Posterior vena cava (tissue), 2 donors: ENCODE measurements at regions of chr16 and their contacts with region 1.

Region 1: DNA sequence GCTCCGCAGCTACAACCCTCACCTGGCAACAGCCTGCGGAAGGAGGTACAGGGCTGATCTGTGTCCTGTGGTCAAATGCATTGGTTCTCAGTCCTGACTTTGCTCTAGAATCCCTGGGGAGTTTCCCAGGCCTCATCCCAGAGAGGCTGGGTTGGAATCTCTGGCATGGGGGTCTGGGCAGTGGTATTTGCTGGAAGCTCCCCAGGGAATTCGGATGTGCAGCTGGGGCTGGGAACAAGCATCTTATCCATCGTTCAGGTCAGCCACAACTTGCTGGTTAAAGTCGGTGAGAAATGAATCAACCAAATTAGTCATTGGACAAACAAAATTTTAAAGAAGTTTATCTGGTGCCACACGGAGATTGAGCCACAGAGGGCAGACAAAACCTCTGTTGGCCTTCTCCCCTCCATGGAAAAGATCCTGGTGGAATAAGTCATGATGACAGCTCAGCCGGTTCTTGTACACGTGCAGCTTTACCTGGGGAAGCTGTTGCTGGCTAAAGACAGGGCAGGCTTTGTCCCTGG is 231.2 kb downstream of the FOXL1 start:
- DNase-seq: no peak

Region 2: GRCh38 chr16:86823895-86824671 is 14.6 kb after region 1 on chr16:
- intact Hi-C with region 1: loop called in 1 of 2 experiments (anchors 1 kb)
- DNase-seq: no peak